Common myeloid progenitor, CD34-positive (primary cell): ENCODE measurements at regions of chr1 and their contacts with region 1.

Region 1: DNA sequence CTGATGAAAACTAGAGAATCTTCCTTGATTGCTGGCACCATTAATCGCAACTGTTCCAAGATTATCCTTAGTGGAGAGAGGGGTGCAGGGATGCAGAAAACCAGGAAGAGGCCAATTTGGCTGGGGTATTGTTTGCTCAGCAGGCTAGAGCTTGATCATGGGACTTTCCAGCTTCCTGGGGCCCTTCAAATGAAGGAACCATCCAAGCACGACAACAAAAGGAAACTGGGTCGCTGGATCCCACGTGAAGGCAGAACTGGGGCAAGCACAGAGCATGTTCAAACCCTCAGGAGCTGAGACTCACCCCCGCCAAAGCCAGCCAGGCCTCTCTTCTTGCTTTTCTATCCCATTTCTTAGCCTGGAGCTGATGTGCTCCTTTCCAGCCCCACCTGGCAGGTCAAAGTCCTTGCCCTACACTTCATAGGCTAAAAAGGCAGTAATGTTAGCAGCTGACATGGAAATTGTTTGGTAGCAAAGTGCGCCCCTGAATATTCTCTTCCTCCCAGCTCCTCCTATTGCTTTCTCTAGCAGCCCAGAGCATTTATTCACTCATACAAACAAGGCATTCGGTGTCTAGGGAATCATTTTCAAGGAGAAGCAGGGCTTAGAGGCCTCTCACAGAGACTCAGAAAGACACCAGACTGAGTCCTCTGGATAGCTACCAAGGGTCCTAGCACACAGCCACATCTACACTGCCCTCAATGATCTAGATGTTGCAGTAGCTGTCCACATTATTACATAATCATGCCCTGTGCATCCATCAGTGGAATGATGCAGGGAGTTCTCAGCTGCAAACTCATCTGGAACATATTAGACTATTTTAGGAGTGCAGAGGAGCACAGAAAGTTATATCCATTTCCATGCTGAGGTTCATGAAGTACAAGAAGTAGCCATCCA is 11.5 kb downstream of the KCNA2 start:
- DNase-seq: no peak
- H3K4me3 ChIP-seq: no peak overlapping the region
- H3K27ac ChIP-seq: no peak overlapping the region
- H3K4me1 ChIP-seq: no peaks in the 10 kb centered on the region
- H3K27me3 ChIP-seq: peaks cover 0 to 26% (median 2%) of the 10 kb centered on the region in 5 experiments

Region 2: GRCh38 chr1:110542725-110543124 is 52.0 kb before region 1 on chr1:
- CTCF ChIA-PET with region 1: no interaction called
- POLR2A ChIA-PET with region 1: no interaction called
- DNase-seq: peak; percentile 36 to 72 (median 68)
- H3K4me3 ChIP-seq: no peak overlapping the region
- H3K27ac ChIP-seq: no peak overlapping the region
- H3K4me1 ChIP-seq: no peaks in the 10 kb centered on the region
- H3K27me3 ChIP-seq: peaks cover 0 to 7% (median 0%) of the 10 kb centered on the region in 5 experiments

Region 3: GRCh38 chr1:110605901-110606656 is 11.4 kb after region 1 on chr1 and contains the start of gene KCNA2:
- CTCF ChIA-PET with region 1: interaction called, 13 read pairs
- POLR2A ChIA-PET with region 1: no interaction called
- DNase-seq: peak in 1 of 3 donors; percentile 50
- H3K4me3 ChIP-seq: peak within 1 kb of the TSS; percentile 24 to 74 (median 55)
- H3K27ac ChIP-seq: no peak within 1 kb of the TSS
- H3K4me1 ChIP-seq: peaks cover 0 to 22% (median 17%) of the 10 kb centered on the region in 4 experiments
- H3K27me3 ChIP-seq: peaks cover 0 to 71% (median 52%) of the 10 kb centered on the region in 5 experiments

Region 4: DNA sequence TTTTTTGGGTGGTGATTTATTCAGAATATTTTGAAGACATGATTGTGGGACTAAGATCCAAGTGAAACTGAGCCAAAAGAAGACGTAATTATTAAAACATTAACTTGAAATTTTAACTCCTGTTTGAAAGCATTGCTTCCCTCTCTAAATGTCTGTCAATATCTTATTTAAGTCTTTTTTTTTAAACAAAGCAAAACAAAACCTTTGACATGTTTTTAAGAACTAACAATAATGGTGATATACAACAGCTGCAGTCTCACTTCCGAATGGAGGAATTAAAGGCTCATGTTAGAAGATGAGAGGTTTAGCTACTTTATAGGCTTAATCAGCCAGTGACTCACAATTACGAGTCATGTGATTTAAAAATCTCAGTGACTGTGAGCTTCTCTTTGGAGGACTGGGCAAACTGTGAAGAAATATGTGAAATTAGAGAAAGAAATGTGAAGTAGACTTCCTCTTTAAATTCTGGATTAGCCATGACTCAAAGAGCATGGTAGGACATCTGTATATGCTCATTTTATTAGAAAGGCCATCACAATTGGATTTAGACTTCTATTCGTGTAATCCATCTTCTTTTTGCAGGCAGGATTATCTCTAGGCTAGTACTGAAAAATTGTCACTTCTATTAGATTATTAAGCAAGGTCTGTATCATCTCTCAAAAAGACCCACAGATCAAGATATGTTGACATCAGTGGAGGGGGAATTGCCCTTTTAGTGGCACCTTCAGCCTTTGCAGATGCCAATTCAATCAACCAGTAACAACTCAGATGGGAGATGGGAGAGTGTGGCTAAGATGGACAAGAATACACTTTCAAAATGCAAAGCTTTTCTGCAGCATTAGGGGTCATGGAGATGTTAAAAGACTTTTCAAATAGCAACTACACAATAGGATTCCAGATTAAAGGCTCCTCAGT is 51.4 kb after region 1 on chr1:
- CTCF ChIA-PET with region 1: no interaction called
- POLR2A ChIA-PET with region 1: no interaction called
- DNase-seq: peak in 2 of 3 donors; percentile 57 to 69
- H3K4me3 ChIP-seq: no peak overlapping the region
- H3K27ac ChIP-seq: no peak overlapping the region
- H3K4me1 ChIP-seq: peaks cover 17 to 39% (median 30%) of the 10 kb centered on the region in 4 experiments
- H3K27me3 ChIP-seq: peaks cover 0 to 39% (median 15%) of the 10 kb centered on the region in 5 experiments